GM13977 (cell line): ENCODE measurements at regions of chr7 and their contacts with region 1.

Region 1: DNA sequence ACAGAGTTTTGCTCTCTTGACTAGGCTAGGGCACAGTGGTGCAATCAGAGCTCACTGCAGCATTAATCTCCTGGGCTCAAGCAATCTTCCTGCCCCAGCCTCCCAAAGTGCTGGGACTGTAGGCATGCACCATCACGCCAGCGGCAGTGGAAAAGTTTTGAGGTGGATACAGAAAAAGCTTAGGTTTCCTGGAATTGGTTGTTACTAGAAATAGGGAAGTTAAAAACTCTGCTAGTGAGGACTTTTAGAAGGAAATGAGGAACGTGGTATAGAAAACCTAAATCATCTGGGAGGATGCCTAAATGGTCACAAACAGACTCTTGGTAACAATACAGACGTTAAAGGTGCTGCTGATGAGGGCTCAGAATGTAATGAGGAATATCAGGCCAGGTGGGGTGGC is 10.9 kb upstream of the SNX8 start:
- DNase-seq: no peak
- CTCF ChIP-seq: no peak

Region 2: DNA sequence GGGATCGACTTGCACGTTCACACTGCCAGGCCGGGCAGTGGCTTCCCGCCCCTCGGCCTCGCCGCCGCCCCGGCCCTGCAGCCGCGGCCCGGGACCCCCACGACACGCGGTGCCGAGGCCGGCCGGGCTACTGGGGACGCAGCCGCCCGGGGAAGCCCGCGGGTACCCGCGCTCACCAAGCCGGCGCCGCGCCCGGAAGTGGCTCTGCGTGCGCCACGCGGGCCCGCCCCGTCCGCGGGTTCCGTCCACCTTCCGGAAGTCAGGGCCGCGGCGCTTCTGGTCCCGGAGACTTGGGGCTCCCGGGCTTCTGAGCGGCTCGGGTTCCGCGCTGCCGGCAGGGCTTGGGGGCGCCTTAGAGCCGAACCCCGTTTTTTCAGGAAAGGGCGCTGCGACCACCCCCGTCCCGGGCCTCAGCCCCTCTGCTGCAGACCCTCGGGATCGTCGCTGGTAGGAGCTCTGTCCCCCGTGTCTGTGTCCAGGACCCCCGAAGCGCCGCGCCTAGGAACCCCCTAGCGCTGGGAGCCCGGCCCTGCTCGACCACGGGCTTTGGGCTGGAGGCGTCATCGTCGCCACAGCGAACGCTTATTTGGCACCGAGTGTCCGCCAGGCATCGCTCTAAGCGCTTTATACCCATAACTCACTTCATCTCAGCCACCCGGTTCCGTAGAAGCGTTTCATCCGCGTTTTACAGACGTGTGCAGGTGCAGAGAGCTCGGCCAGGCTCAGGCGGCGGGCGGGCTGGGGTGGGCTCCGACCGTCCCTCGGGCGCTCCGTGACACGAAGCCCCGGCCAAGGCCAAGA is 755.1 kb before region 1 on chr7 and contains the start of gene PSMG3:
- in situ Hi-C with region 1: loop called (anchors 25 kb)
- DNase-seq: peak; percentile 98
- CTCF ChIP-seq: peak; percentile 16

Region 3: DNA sequence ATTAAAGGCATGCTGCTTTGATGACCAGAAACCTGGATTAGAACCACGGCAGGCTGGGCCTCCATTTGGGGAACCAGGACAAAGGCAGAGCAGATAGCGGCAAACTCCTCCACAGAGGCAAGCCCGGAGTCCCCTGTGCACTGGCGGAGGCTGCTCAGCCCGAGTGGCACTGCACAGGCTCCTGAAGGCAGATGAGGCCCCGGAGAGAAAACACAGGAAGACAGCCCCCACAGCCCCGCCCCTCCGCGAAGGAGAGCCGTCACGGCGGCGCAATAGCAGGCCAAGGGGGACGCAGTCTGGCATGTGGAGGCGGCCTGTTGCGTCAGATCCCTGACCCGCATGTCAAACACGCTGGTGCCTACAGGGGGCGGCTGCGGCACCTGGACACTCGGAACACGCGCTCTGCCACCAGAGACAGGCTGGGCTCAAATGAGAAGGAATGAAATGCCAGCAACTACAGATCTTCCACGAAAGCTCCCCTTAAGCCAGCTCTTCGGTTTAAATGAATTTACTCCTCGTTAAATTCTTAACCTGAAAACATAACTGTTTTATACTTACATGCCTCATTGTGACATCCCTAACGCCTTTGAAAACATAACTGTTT is 221.0 kb before region 1 on chr7:
- in situ Hi-C with region 1: loop called (anchors 25 kb)
- DNase-seq: peak; percentile 81
- CTCF ChIP-seq: peak; percentile 50